Activated CD8-positive, alpha-beta T cell treated with anti-CD3 and anti-CD28 coated beads, Interleukin-2, amount 10 ng/mL, durations not matched to agents 7 days and 5 days (primary cell): ENCODE measurements at regions of chr18 and their contacts with region 1.

Region 1: GRCh38 chr18:48475635-48476549 is 62.9 kb upstream of the CTIF start:
- DNase-seq: peak; percentile 46
- ATAC-seq: peak; percentile 53
- H3K4me3 Mint-ChIP-seq: no peak overlapping the region
- H3K27ac Mint-ChIP-seq: no peak overlapping the region
- H3K4me1 Mint-ChIP-seq: no peaks in the 10 kb centered on the region
- H3K27me3 Mint-ChIP-seq: peaks cover 25% of the 10 kb centered on the region

Region 2: DNA sequence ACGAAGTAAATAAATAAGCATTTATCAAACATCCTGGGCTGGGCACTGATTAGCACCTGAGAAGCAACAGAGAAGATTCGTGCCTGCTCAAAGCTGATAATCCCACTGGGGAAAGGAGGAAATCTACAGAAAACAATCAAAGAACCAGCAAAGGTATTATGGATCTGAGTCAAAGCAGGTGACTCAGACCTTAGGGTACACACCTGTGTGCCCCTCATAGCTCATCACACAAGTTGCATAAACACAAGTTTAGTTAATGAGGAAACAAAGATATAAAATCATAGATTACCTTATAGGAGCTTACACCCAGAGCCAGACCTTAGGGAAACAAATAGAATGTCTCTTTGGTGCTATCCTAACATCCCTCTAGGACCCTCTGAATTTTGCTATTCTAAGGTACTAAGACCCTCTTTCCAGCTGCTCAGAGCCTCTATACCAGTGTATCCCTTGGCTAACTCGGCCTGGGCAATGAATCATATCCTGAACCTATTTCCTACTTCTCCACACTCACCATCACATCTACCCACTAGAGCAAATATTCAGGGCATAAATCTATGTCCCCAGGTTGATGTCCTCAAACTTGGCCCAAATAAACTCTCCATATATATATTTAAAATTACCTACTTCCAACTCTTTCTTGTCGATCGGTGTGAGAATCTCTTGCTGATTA is 43.7 kb after region 1 on chr18:
- CTCF ChIA-PET with region 1: no interaction called
- POLR2A ChIA-PET with region 1: no interaction called
- DNase-seq: no peak
- ATAC-seq: no peak
- H3K4me3 Mint-ChIP-seq: no peak overlapping the region
- H3K27ac Mint-ChIP-seq: no peak overlapping the region
- H3K4me1 Mint-ChIP-seq: no peaks in the 10 kb centered on the region
- H3K27me3 Mint-ChIP-seq: peaks cover 26% of the 10 kb centered on the region

Region 3: DNA sequence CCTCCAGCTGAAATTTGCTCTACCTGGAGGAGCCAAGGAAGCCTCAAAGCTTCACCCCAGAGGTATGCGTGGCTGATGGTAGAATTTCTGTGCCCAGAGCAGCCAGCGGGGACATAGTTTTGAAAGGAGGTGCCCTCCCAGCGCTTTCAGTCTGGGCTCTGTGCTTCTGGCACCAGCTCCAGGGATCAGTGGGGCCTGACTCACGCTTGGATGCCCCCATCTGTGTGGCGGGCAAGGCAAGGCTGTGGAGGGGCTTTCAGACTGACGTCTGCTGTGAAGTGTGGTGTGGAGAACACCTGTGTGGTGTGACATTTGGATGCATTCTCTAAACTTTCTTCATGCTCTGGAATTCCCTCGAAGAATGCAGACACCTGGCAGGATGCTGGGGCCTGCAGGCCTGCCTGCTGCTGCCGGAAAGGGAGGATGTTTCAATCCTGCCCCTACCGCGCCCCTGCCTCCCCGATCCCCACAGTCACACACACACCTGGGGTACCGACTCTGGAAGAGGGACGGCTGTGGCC is 147.1 kb after region 1 on chr18:
- CTCF ChIA-PET with region 1: no interaction called
- POLR2A ChIA-PET with region 1: no interaction called
- DNase-seq: no peak
- ATAC-seq: no peak
- H3K4me3 Mint-ChIP-seq: no peak overlapping the region
- H3K27ac Mint-ChIP-seq: no peak overlapping the region
- H3K4me1 Mint-ChIP-seq: no peaks in the 10 kb centered on the region
- H3K27me3 Mint-ChIP-seq: no peaks in the 10 kb centered on the region

Region 4: DNA sequence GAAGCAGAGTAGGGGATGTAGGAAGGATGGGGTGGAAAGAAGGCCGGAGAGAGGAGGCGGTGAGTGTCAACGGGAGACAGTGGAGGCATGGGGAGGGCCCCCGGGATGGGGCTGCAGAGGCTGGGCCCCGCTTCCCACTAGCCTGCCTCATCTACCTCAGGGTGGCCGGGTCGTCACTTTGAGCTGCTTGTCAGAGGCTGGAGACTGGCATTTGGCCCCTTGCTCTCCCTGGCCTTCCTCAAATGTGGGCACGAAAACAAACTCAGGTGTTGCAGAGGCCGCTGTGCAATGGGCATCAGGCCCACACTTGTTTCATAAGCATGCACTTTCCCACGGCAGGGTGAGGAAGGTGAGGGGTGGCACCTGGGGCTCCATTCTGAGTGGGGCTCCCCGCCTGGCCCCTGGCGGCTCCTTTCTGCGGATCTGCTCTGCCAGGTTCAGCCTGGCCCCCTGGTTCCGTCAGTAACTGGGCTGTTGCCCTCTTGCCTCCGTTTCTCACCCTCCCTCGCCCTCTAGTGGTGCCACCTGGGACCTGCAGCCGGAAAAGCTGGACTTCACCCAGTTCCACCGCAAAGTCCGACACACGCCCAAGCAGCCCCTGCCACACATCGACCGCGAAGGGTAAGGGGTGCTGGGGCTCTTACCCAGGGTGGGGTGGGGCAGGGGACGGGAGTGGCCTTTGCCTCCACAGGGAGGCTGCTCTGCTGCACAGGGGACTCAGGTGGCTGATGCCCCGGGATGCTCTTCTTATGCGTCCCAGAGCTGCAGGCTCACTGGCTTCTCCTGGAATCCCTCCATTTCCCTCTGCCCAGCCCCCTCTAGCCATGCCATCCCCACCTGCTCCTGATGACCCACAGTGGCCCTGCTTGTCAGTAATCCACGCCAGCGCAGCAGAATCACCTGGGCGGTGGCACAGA is 188.3 kb after region 1 on chr18:
- CTCF ChIA-PET with region 1: interaction called, 14 read pairs
- POLR2A ChIA-PET with region 1: no interaction called
- DNase-seq: peak; percentile 61
- ATAC-seq: no peak
- H3K4me3 Mint-ChIP-seq: no peak overlapping the region
- H3K27ac Mint-ChIP-seq: no peak overlapping the region
- H3K4me1 Mint-ChIP-seq: no peaks in the 10 kb centered on the region
- H3K27me3 Mint-ChIP-seq: peaks cover 2% of the 10 kb centered on the region